Ascending aorta (tissue), 2 donors: ENCODE measurements at regions of chr17 and their contacts with region 1.

Region 1: GRCh38 chr17:76506408-76507349 is 5.5 kb upstream of the RHBDF2 start:
- DNase-seq: peak in 1 of 2 donors; percentile 91
- H3K4me3 ChIP-seq: no peak overlapping the region
- H3K27ac ChIP-seq: no peak overlapping the region
- H3K4me1 ChIP-seq: peaks cover 3 to 12% of the 10 kb centered on the region in 2 donors
- H3K27me3 ChIP-seq: no peaks in the 10 kb centered on the region
- CTCF ChIP-seq: peak; percentile 92 to 97 (median 93)

Region 2: GRCh38 chr17:76408052-76408849 is 98.4 kb before region 1 on chr17:
- intact Hi-C with region 1: loop called (anchors 1 kb)
- DNase-seq: no peak
- H3K4me3 ChIP-seq: no peak overlapping the region
- H3K27ac ChIP-seq: no peak overlapping the region
- H3K4me1 ChIP-seq: peaks cover 0 to 5% of the 10 kb centered on the region in 2 donors
- H3K27me3 ChIP-seq: no peaks in the 10 kb centered on the region
- CTCF ChIP-seq: peak; percentile 33 to 77 (median 50)

Region 3: DNA sequence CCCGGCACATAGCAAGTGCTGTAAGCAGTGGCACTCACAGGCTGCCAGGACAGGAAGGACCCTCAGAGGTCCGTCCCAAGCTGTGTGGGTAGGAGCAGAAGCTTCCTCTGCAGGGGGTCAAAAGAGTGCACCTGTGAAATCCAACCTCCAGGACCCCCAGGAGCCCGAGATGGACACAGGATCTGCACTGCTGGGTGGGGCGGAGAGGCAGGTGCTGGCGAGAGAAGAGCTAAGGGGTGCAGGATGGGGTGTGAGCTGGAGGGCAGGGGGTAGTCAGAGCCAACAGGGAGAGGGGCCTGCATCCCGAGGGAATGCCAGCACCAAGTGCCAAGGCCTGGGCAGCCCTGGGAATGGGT is 39.9 kb before region 1 on chr17:
- intact Hi-C with region 1: loop called (anchors 1 kb)
- DNase-seq: no peak
- H3K4me3 ChIP-seq: no peak overlapping the region
- H3K27ac ChIP-seq: no peak overlapping the region
- H3K4me1 ChIP-seq: peaks cover 0 to 2% of the 10 kb centered on the region in 2 donors
- H3K27me3 ChIP-seq: no peaks in the 10 kb centered on the region
- CTCF ChIP-seq: no peak